OCI-LY7 (cell line): ENCODE measurements at regions of chr5 and their contacts with region 1.

Region 1: GRCh38 chr5:68872088-68872839 is 221.6 kb upstream of the SLC30A5 start:
- DNase-seq: no peak
- H3K4me3 ChIP-seq: no peak overlapping the region
- H3K27ac ChIP-seq: no peak overlapping the region
- H3K4me1 ChIP-seq: no peaks in the 10 kb centered on the region
- CTCF ChIP-seq: no peak

Region 2: GRCh38 chr5:68848091-68848490 is 24.2 kb before region 1 on chr5:
- CTCF ChIA-PET with region 1: no interaction called
- POLR2A ChIA-PET with region 1: interaction called, 11 read pairs
- intact Hi-C with region 1: no loop called
- DNase-seq: no peak
- H3K4me3 ChIP-seq: no peak overlapping the region
- H3K27ac ChIP-seq: no peak overlapping the region
- H3K4me1 ChIP-seq: no peaks in the 10 kb centered on the region
- CTCF ChIP-seq: no peak